RWPE1 (cell line): ENCODE measurements at regions of chr13 and their contacts with region 1.

Region 1: GRCh38 chr13:50401049-50401505 is 385.8 kb downstream of the KCNRG start:
- DNase-seq: peak; percentile 48
- H3K27ac ChIP-seq: peak overlapping the region; percentile 66
- CTCF ChIP-seq: no peak

Region 2: GRCh38 chr13:50268500-50268899 is 132.6 kb before region 1 on chr13:
- CTCF ChIA-PET with region 1: no interaction called
- POLR2A ChIA-PET with region 1: no interaction called
- DNase-seq: peak; percentile 9
- H3K27ac ChIP-seq: no peak overlapping the region
- CTCF ChIP-seq: no peak

Region 3: DNA sequence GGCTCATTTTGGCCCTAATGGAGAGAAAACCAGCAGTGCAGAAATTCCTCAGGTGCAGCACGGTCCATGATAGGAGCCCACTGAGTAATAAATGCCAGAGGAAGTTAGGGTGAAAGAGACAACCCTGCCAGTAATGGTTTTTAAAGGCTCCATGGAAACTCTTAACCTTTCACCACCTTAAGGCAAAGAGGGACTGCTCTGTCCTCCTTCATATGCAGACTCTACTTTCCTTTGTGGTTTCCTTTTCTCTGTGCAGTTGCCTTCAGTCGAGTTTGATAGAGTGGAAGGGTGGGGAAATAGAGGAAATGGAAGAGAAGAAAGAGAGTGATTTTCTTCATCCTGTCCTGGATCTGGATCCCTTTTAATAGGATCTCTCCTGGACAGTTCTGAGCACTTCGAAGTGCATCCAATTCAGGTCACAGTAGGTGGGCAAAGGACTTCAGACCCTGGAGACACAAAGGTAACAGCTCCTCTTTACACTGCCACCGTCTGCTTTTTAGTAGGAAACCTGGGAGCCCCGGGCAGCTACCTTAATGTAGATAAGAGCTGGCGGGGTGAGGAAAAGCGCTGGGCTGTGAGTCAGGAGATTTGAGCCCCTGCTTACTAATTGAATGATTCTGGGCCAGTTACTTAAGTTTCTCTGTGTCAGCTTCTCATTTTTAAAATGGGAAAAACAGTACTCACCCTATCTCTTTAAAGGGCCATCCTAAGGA is 91.0 kb before region 1 on chr13:
- CTCF ChIA-PET with region 1: interaction called, 10 read pairs
- POLR2A ChIA-PET with region 1: no interaction called
- DNase-seq: no peak
- H3K27ac ChIP-seq: no peak overlapping the region
- CTCF ChIP-seq: no peak

Region 4: DNA sequence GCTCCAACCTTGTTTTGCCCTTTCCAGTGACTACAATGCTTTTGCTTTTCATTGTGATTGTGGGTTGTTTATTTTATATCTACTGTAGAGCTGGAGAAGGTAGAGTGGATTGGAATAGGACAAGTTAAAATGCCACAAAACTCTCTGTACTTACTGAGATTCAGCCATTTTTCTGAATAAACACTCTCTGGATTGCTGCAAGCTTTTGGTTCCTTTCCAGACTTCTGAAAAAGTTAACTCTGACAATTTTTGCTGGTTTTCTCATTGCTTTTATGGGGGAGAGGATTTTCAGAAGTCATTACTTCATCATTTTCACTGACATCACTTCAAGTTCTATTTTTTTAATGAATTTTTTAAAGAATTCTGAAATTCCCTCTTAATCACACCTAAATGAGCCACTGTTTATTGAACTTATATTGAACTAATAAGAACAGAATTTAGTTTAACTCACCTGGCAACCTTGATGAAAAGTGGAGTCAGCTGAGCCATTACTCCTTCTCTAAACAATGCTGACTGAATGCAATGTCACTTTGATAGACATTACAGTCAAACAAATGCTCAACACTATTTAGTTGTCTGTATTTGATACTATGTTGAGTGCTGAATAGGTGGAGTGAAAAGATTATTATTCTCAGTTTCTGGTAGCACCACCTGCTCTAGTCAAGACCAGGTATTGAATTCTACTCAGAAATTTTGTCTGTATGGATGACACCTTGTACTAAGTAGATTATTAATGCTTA is 138.9 kb after region 1 on chr13:
- CTCF ChIA-PET with region 1: no interaction called
- POLR2A ChIA-PET with region 1: no interaction called
- DNase-seq: no peak
- H3K27ac ChIP-seq: no peak overlapping the region
- CTCF ChIP-seq: no peak